CD8-positive, alpha-beta T cell (primary cell): ENCODE measurements at regions of chr6 and their contacts with region 1.

Region 1: GRCh38 chr6:145863988-145864616 is 49.5 kb upstream of the FBXO30 start:
- DNase-seq: no peak
- ATAC-seq: no peak
- H3K4me3 ChIP-seq: no peak overlapping the region
- H3K4me3 Mint-ChIP-seq: no peak overlapping the region
- H3K27ac ChIP-seq: no peak overlapping the region
- H3K27ac Mint-ChIP-seq: no peak overlapping the region
- H3K4me1 ChIP-seq: peaks cover 22% of the 10 kb centered on the region
- H3K4me1 Mint-ChIP-seq: peaks cover 40% of the 10 kb centered on the region
- H3K27me3 ChIP-seq: no peaks in the 10 kb centered on the region
- H3K27me3 Mint-ChIP-seq: no peaks in the 10 kb centered on the region
- CTCF ChIP-seq: no peak

Region 2: DNA sequence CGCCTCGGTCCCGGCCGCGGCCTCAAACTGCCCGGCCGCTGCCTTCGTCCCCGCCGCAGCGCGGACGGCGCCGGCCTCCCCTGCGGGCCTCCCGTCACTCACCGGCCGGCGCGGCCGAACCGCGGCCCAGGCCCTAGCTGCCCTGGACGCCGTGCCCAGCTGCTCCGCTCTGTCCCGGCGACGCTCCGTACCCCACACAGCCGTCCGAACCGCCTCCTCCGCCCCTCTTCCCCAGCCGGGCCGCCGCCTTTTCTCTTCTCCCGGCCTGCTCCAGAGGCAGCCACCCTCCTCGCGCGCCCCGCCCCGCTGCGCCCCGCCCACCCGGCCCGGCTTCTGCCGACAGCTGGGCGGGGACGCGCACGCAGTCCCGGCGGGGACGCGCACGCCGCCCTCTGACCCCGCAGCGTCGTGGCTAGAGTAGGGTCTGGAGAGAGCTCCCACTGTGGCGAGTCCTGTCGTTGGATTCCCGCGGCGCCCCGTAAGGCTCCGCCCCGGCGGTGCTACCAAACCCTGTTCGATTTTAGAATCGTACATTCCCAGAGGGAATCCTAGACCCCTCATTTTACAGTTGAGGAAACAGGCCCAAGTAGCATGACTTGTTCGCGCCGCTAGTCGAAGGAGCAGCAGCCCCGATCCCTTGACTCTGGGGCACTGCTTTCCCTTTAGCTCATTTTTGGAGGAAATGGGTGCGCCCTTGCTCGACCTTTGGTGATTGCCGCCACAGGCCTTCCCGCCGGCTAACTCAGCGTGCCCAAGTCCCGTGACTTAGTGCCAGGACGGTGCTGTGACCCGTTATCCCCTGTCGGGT is 49.4 kb before region 1 on chr6 and contains the start of gene FBXO30:
- CTCF ChIA-PET with region 1: no interaction called
- POLR2A ChIA-PET with region 1: interaction called, 8 read pairs
- intact Hi-C with region 1: loop called in 1 of 2 experiments (anchors 5 kb)
- DNase-seq: peak; percentile 73 to 94 (median 84)
- ATAC-seq: peak; percentile 89
- H3K4me3 ChIP-seq: peak within 1 kb of the TSS; percentile 80 to 83
- H3K4me3 Mint-ChIP-seq: peak within 1 kb of the TSS; percentile 96
- H3K27ac ChIP-seq: peak within 1 kb of the TSS; percentile 58 to 89
- H3K27ac Mint-ChIP-seq: peak within 1 kb of the TSS; percentile 96
- H3K4me1 ChIP-seq: peaks cover 32% of the 10 kb centered on the region
- H3K4me1 Mint-ChIP-seq: peaks cover 45% of the 10 kb centered on the region
- H3K27me3 ChIP-seq: no peaks in the 10 kb centered on the region
- H3K27me3 Mint-ChIP-seq: no peaks in the 10 kb centered on the region
- CTCF ChIP-seq: peak; percentile 33
- total RNA-seq, gene FBXO30: 1.5 to 1.7 TPM